ENCODE measurements at regions of chr11 and their contacts with region 1.

Region 1: GRCh38 chr11:17978553-17979287 is 34.1 kb downstream of the SERGEF start:
- DNase-seq: peak in 3 of 14 experiments; percentile 9 to 20 (median 15)
- ATAC-seq: no peak
- H3K4me3 ChIP-seq: no peak overlapping the region
- H3K4me3 Mint-ChIP-seq: no peak overlapping the region
- H3K27ac ChIP-seq: no peak overlapping the region
- H3K27ac Mint-ChIP-seq: no peak overlapping the region
- H3K4me1 ChIP-seq: peaks cover 6% of the 10 kb centered on the region
- H3K4me1 Mint-ChIP-seq: peaks cover 11% of the 10 kb centered on the region
- H3K27me3 ChIP-seq: no peaks in the 10 kb centered on the region
- H3K27me3 Mint-ChIP-seq: no peaks in the 10 kb centered on the region
- CTCF ChIP-seq: no peak

Region 2: GRCh38 chr11:17230867-17231851 is 747.6 kb before region 1 on chr11:
- CTCF ChIA-PET with region 1: no interaction called
- POLR2A ChIA-PET with region 1: no interaction called
- intact Hi-C with region 1: loop called in 1 of 2 experiments (anchors 5 kb)
- DNase-seq: peak in 3 of 14 experiments; percentile 50 to 57 (median 54)
- ATAC-seq: peak; percentile 68
- H3K4me3 ChIP-seq: no peak overlapping the region
- H3K4me3 Mint-ChIP-seq: no peak overlapping the region
- H3K27ac ChIP-seq: no peak overlapping the region
- H3K27ac Mint-ChIP-seq: no peak overlapping the region
- H3K4me1 ChIP-seq: peaks cover 9% of the 10 kb centered on the region
- H3K4me1 Mint-ChIP-seq: peaks cover 16% of the 10 kb centered on the region
- H3K27me3 ChIP-seq: no peaks in the 10 kb centered on the region
- H3K27me3 Mint-ChIP-seq: no peaks in the 10 kb centered on the region
- CTCF ChIP-seq: no peak

Region 3: GRCh38 chr11:17598700-17599459 is 379.8 kb before region 1 on chr11:
- CTCF ChIA-PET with region 1: no interaction called
- POLR2A ChIA-PET with region 1: no interaction called
- intact Hi-C with region 1: loop called in 1 of 2 experiments (anchors 2 kb)
- DNase-seq: peak; percentile 27 to 72 (median 56)
- ATAC-seq: peak; percentile 56
- H3K4me3 ChIP-seq: no peak overlapping the region
- H3K4me3 Mint-ChIP-seq: no peak overlapping the region
- H3K27ac ChIP-seq: no peak overlapping the region
- H3K27ac Mint-ChIP-seq: no peak overlapping the region
- H3K4me1 ChIP-seq: no peaks in the 10 kb centered on the region
- H3K4me1 Mint-ChIP-seq: no peaks in the 10 kb centered on the region
- H3K27me3 ChIP-seq: peaks cover 0 to 4% of the 10 kb centered on the region in 2 experiments
- H3K27me3 Mint-ChIP-seq: peaks cover 6% of the 10 kb centered on the region
- CTCF ChIP-seq: peak; percentile 89

Region 4: GRCh38 chr11:17730608-17731462 is 247.9 kb before region 1 on chr11:
- CTCF ChIA-PET with region 1: no interaction called
- POLR2A ChIA-PET with region 1: no interaction called
- intact Hi-C with region 1: loop called (anchors 1 to 2 kb)
- DNase-seq: peak; percentile 15 to 62 (median 39)
- ATAC-seq: peak; percentile 66
- H3K4me3 ChIP-seq: no peak overlapping the region
- H3K4me3 Mint-ChIP-seq: no peak overlapping the region
- H3K27ac ChIP-seq: no peak overlapping the region
- H3K27ac Mint-ChIP-seq: no peak overlapping the region
- H3K4me1 ChIP-seq: peaks cover 4% of the 10 kb centered on the region
- H3K4me1 Mint-ChIP-seq: peaks cover 5% of the 10 kb centered on the region
- H3K27me3 ChIP-seq: peaks cover 25 to 49% of the 10 kb centered on the region in 2 experiments
- H3K27me3 Mint-ChIP-seq: peaks cover 64% of the 10 kb centered on the region
- CTCF ChIP-seq: peak; percentile 62

Region 5: GRCh38 chr11:17991783-17992433 is 13.2 kb after region 1 on chr11:
- CTCF ChIA-PET with region 1: interaction called, 3 read pairs
- POLR2A ChIA-PET with region 1: interaction called, 6 read pairs
- intact Hi-C with region 1: loop called in 1 of 2 experiments (anchors 1 kb)
- DNase-seq: peak in 13 of 14 experiments; percentile 15 to 71 (median 35)
- ATAC-seq: peak; percentile 88
- H3K4me3 ChIP-seq: no peak overlapping the region
- H3K4me3 Mint-ChIP-seq: no peak overlapping the region
- H3K27ac ChIP-seq: no peak overlapping the region
- H3K27ac Mint-ChIP-seq: no peak overlapping the region
- H3K4me1 ChIP-seq: no peaks in the 10 kb centered on the region
- H3K4me1 Mint-ChIP-seq: no peaks in the 10 kb centered on the region
- H3K27me3 ChIP-seq: no peaks in the 10 kb centered on the region
- H3K27me3 Mint-ChIP-seq: no peaks in the 10 kb centered on the region
- CTCF ChIP-seq: peak; percentile 88